Spleen (tissue), 13 donors: ENCODE measurements at regions of chr21 and their contacts with region 1.

Region 1: GRCh38 chr21:17819877-17820229 is 697 bp upstream of the C21orf91 start:
- DNase-seq: no peak
- H3K4me3 ChIP-seq: peak overlapping the region; percentile 48 to 89 (median 80)
- H3K27ac ChIP-seq: peak overlapping the region; percentile 89 to 96 (median 95)
- H3K4me1 ChIP-seq: peaks cover 23 to 53% (median 43%) of the 10 kb centered on the region in 6 donors
- H3K27me3 ChIP-seq: no peaks in the 10 kb centered on the region
- CTCF ChIP-seq: peak in 4 of 11 experiments; percentile 12 to 37 (median 16)
- POLR2A ChIP-seq: no peak

Region 2: GRCh38 chr21:17611414-17612022 is 208.3 kb before region 1 on chr21:
- intact Hi-C with region 1: loop called (anchors 10 kb)
- DNase-seq: peak; percentile 88
- H3K4me3 ChIP-seq: peak overlapping the region; percentile 68 to 85 (median 80)
- H3K27ac ChIP-seq: peak overlapping the region; percentile 78 to 92 (median 88)
- H3K4me1 ChIP-seq: peaks cover 4 to 34% (median 13%) of the 10 kb centered on the region in 6 donors
- H3K27me3 ChIP-seq: no peaks in the 10 kb centered on the region
- CTCF ChIP-seq: peak in 5 of 11 experiments; percentile 19 to 43 (median 24)
- POLR2A ChIP-seq: no peak